Activated T-helper 1 cell treated with anti-CD3 and anti-CD28 coated beads, Interleukin-12 subunit alpha, Interleukin-12 subunit beta, Interleukin-2, Interleukin-4 antibody, amounts not matched to agents 30 ng/mL and 10 ng/mL and 1 ng/mL, durations not matched to agents 14 hours and 24 hours and 36 hours (primary cell): ENCODE measurements at regions of chr11 and their contacts with region 1.

Region 1: GRCh38 chr11:120335908-120336640 is at the start of gene ARHGEF12:
- DNase-seq: peak; percentile 70
- H3K4me3 Mint-ChIP-seq: peak within 1 kb of the TSS; percentile 96
- H3K27ac Mint-ChIP-seq: peak within 1 kb of the TSS; percentile 83
- H3K4me1 Mint-ChIP-seq: peaks cover 40% of the 10 kb centered on the region
- H3K27me3 Mint-ChIP-seq: peaks cover 45% of the 10 kb centered on the region
- total RNA-seq, gene ARHGEF12: 25.7 and 26.0 TPM in 2 replicates

Region 2: DNA sequence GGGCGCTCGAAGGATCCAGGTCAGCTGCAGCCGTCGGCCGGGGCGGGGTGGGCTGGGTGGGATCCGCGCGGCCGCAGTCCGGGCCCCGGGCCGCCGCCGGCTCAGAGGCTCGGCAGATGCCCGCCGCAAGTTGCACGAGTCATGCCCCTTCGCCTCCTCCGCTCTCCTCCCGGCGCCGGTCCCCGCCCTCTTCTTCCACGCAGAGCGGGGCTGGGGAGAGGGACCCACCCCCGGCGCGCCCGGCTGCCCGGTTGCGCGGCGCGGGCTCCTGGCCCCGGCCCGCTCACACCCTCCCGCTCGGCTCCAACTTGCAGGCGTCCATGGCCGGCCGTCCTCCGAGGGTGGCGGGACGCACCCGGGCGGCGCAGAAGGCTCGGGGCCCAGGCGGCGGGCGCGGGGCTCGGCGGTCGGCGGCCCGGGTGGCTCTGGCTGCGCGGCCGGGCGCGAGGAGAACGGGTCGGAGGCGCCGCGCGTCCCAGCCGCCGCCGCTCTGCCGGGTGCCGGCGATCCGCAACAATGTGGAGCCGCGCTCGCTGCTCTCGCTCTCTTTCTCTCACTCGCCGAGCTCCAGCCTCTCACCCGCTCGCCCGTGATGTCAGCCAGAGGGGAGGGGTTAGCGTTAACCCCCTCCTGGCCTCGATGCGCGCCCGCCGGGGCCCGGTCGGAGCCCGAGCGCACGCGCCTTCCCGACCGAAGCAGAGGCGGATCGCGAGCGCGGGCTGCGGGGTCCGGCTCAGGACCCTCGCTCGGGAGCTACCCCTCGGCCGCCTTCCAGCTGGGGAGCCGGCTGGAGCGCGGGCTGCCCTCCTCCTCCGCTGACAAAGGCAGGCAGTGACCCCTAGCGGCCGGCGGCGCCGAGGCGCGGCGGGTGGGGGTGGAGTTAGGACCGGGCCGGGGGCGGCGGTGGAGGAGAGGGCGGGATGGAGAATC is 607.2 kb before region 1 on chr11 and contains the start of gene NECTIN1:
- intact Hi-C with region 1: loop called (anchors 5 kb)
- DNase-seq: peak; percentile 78
- H3K4me3 Mint-ChIP-seq: peak within 1 kb of the TSS; percentile 88
- H3K27ac Mint-ChIP-seq: peak within 1 kb of the TSS; percentile 79
- H3K4me1 Mint-ChIP-seq: no peaks in the 10 kb centered on the region
- H3K27me3 Mint-ChIP-seq: peaks cover 60% of the 10 kb centered on the region
- total RNA-seq, gene NECTIN1: 4.5 and 5.4 TPM in 2 replicates

Region 3: GRCh38 chr11:119952441-119952840 is 383.6 kb before region 1 on chr11:
- intact Hi-C with region 1: no loop called
- DNase-seq: no peak
- H3K4me3 Mint-ChIP-seq: no peak overlapping the region
- H3K27ac Mint-ChIP-seq: no peak overlapping the region
- H3K4me1 Mint-ChIP-seq: no peaks in the 10 kb centered on the region
- H3K27me3 Mint-ChIP-seq: peaks cover 8% of the 10 kb centered on the region

Region 4: GRCh38 chr11:120324932-120325810 is 10.9 kb before region 1 on chr11 and contains the start of gene TLCD5:
- intact Hi-C with region 1: loop called (anchors 1 kb)
- DNase-seq: peak; percentile 36
- H3K4me3 Mint-ChIP-seq: peak within 1 kb of the TSS; percentile 81
- H3K27ac Mint-ChIP-seq: peak within 1 kb of the TSS; percentile 18
- H3K4me1 Mint-ChIP-seq: peaks cover 24% of the 10 kb centered on the region
- H3K27me3 Mint-ChIP-seq: peaks cover 56% of the 10 kb centered on the region
- total RNA-seq, gene TLCD5: 1.2 and 1.7 TPM in 2 replicates

Region 5: DNA sequence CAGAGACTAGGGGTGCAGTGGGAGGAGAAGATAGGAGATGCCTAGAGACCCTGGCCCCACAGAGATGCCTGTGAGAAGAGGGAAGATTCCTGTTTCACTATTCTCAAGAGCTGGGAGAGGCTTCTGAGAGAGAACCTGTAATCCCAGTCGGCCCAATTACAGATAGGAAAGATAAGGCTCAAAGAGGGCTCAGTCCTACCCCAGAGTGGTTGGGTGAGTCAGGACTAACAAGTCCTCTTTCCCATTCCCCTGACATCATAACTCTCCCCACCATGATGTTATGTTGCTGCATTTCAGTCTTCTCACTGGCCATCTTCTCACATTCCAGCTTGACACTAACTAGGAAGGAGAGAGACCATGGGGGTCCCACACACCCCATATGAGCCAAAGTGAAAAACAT is 18.0 kb after region 1 on chr11:
- intact Hi-C with region 1: no loop called
- DNase-seq: no peak
- H3K4me3 Mint-ChIP-seq: no peak overlapping the region
- H3K27ac Mint-ChIP-seq: no peak overlapping the region
- H3K4me1 Mint-ChIP-seq: peaks cover 5% of the 10 kb centered on the region
- H3K27me3 Mint-ChIP-seq: peaks cover 44% of the 10 kb centered on the region

Region 6: DNA sequence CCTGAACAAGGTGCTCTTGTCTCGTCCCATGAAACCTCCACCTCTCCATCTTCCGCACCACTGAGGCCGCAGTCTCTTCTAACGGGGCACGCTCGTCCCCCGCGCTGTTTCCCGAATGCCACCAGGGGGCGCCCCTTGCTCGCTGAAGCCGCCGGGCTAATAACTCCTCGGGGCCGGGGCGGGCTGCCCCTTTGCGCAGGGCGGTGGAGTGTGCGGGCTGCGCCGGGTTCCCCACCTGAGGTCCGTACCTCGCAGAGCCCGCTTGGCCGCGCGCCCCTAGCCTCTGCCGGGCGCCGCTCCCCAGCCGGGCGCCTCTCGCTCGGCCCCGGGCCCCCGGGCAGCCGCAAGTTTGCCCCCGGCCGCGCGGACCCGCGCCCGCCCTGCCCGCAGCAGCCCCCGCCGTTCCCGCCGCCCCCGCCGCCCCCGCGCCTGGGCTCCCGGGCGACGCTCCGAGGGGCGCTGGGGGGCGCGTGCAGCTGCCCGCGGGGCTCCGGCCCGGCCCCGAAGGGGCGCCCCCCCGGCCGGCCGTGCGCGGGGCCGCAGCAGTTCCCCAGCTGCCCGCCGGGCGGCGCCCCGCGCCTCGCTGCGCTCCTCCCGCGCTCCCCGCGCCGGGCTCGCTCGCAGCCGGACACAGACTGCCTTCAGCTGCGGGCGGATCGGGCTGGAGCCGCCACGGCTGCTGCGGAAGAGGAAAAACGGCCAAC is 175.2 kb after region 1 on chr11 and contains the start of gene GRIK4:
- intact Hi-C with region 1: loop called (anchors 1 kb)
- DNase-seq: peak; percentile 59
- H3K4me3 Mint-ChIP-seq: no peak within 1 kb of the TSS
- H3K27ac Mint-ChIP-seq: no peak within 1 kb of the TSS
- H3K4me1 Mint-ChIP-seq: peaks cover 5% of the 10 kb centered on the region
- H3K27me3 Mint-ChIP-seq: peaks cover 60% of the 10 kb centered on the region
- total RNA-seq, gene GRIK4: 0.16 TPM in 1 of 2 replicates, not detected in the other

Region 7: GRCh38 chr11:121194731-121195596 is 858.9 kb after region 1 on chr11:
- intact Hi-C with region 1: loop called (anchors 10 kb)
- DNase-seq: peak; percentile 34
- H3K4me3 Mint-ChIP-seq: no peak overlapping the region
- H3K27ac Mint-ChIP-seq: no peak overlapping the region
- H3K4me1 Mint-ChIP-seq: peaks cover 7% of the 10 kb centered on the region
- H3K27me3 Mint-ChIP-seq: peaks cover 16% of the 10 kb centered on the region